ENCODE measurements at regions of chr9 and their contacts with region 1.

Region 1: GRCh38 chr9:99050292-99050911 is 54.5 kb upstream of the TGFBR1 start:
- DNase-seq: no peak
- H3K4me3 Mint-ChIP-seq: no peak overlapping the region
- H3K27ac Mint-ChIP-seq: no peak overlapping the region
- H3K4me1 Mint-ChIP-seq: peaks cover 38% of the 10 kb centered on the region
- H3K27me3 Mint-ChIP-seq: no peaks in the 10 kb centered on the region

Region 2: GRCh38 chr9:98887918-98888510 is 162.4 kb before region 1 on chr9:
- CTCF ChIA-PET with region 1: no interaction called
- POLR2A ChIA-PET with region 1: no interaction called
- DNase-seq: no peak
- H3K4me3 Mint-ChIP-seq: no peak overlapping the region
- H3K27ac Mint-ChIP-seq: no peak overlapping the region
- H3K4me1 Mint-ChIP-seq: no peaks in the 10 kb centered on the region
- H3K27me3 Mint-ChIP-seq: peaks cover 29% of the 10 kb centered on the region

Region 3: DNA sequence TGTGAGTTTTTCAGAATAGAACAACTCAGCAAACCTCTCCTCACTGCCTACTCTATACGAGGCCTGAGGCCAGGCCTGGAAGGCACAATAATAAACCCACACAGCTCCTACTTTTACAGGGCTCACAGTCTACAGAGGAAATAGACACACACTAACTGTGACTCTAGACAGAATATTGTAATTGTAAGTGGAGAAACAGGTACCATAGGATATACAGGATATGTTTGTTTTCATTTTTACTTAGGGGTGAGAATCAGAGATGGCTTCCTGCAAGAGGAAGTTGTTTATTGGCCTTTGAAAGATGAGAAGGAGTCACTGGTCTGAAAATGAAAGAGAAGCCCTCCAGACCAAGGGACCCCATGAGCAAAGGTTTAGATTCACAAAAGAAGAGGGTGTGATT is 18.7 kb after region 1 on chr9:
- CTCF ChIA-PET with region 1: interaction called, 11 read pairs
- POLR2A ChIA-PET with region 1: no interaction called
- DNase-seq: no peak
- H3K4me3 Mint-ChIP-seq: no peak overlapping the region
- H3K27ac Mint-ChIP-seq: peak overlapping the region; percentile 90
- H3K4me1 Mint-ChIP-seq: peaks cover 44% of the 10 kb centered on the region
- H3K27me3 Mint-ChIP-seq: no peaks in the 10 kb centered on the region